ENCODE measurements at regions of chr9 and their contacts with region 1.

Region 1: GRCh38 chr9:120925535-120926396 is 830 bp downstream of the TRAF1 start:
- DNase-seq: peak; percentile 45 to 84 (median 79)
- H3K4me3 ChIP-seq: no peak overlapping the region
- H3K27ac ChIP-seq: peak overlapping the region in 1 of 2 experiments; percentile 51
- H3K4me1 ChIP-seq: peaks cover 5 to 46% (median 37%) of the 10 kb centered on the region in 4 experiments
- H3K27me3 ChIP-seq: no peaks in the 10 kb centered on the region

Region 2: DNA sequence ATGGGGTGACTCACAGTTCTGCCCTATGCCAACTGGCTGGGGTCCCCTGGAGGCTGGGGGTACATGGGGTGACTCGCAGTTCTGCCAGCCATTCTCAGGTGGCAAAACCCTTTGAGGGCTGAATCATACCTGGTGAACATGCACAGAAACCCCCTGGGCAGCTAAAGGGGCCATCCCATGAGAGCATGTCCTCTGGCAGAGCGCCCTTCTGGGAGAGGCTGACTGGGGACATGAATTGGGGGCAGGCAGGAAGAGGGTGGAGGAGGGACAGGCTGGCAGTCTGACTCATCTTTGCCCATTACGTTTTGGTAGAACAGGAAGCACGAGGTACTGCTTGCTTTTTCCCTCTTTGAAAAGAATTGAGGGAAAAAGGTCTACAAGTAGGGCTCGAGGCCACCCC is 15.9 kb before region 1 on chr9:
- CTCF ChIA-PET with region 1: interaction called, 29 read pairs
- POLR2A ChIA-PET with region 1: no interaction called
- DNase-seq: peak; percentile 30 to 80 (median 70)
- H3K4me3 ChIP-seq: no peak overlapping the region
- H3K27ac ChIP-seq: no peak overlapping the region
- H3K4me1 ChIP-seq: peaks cover 0 to 23% (median 11%) of the 10 kb centered on the region in 4 experiments
- H3K27me3 ChIP-seq: no peaks in the 10 kb centered on the region

Region 3: DNA sequence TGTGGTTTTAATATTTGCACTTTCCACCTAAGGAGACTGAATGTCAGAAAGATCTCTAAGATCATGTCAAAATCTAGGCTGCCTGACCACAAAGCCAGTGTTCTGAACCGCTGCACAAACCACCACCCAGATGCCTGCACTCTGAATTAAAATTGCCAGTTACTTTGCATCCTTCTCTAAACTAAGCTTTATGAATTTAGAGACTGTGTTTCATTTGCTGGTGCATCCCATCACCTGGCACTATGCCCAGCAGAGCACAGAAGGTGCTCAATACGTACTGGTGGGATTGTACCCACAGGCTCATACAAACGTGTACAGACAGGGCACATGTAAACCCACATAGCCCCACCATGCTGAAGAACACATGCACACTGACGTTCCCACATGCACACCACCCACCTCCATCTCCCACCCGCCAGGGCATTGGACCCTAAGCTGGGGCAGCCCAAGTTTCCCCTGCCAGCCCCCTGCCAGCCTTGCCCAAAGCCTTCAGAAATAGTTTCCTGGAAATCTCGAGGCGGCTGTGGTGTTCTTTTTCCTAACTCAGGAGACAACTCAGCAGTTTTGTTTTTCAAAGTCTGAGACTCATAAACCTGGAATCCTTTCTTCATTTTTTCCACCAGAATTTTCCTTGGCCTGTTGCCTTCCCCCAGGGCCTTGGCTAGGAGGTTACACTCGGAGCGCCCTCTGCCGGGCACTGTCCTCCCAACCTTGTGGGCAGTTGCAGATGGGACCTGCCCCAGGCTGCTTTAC is 10.4 kb after region 1 on chr9:
- CTCF ChIA-PET with region 1: interaction called, 10 read pairs
- POLR2A ChIA-PET with region 1: no interaction called
- DNase-seq: peak; percentile 81 to 83 (median 82)
- H3K4me3 ChIP-seq: peak overlapping the region in 2 of 7 experiments; percentile 26 to 45
- H3K27ac ChIP-seq: peak overlapping the region in 1 of 2 experiments; percentile 33
- H3K4me1 ChIP-seq: peaks cover 32 to 60% (median 54%) of the 10 kb centered on the region in 4 experiments
- H3K27me3 ChIP-seq: no peaks in the 10 kb centered on the region

Measured in common myeloid progenitor, CD34-positive (primary cell).